Breast epithelium (tissue), 4 donors: ENCODE measurements at regions of chr7 and their contacts with region 1.

Region 1: GRCh38 chr7:145831616-145832206 is 284.9 kb upstream of the CNTNAP2 start:
- DNase-seq: no peak
- H3K4me3 ChIP-seq: no peak overlapping the region
- H3K27ac ChIP-seq: no peak overlapping the region
- H3K4me1 ChIP-seq: no peaks in the 10 kb centered on the region
- H3K27me3 ChIP-seq: no peaks in the 10 kb centered on the region
- CTCF ChIP-seq: no peak
- POLR2A ChIP-seq: no peak

Region 2: DNA sequence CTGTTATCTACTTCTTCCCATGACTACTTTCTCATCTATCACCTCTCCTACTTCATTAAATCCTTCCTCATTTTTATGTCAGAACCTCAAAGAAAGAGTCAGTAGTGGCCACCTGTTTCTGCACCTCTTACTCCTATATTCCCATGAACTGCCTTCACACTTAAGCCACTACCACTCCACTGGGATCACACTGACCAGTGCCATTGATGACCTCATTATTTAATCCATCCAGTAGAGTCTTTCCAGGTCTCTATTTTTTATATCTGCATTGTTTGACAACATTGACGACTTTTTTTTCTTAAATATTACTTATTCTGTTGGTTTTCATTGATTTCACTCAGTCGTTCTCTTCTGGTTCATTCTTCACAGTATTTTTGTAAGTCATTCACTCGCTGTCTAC is 286.5 kb before region 1 on chr7:
- intact Hi-C with region 1: loop called (anchors 5 kb)
- DNase-seq: no peak
- H3K4me3 ChIP-seq: no peak overlapping the region
- H3K27ac ChIP-seq: no peak overlapping the region
- H3K4me1 ChIP-seq: no peaks in the 10 kb centered on the region
- H3K27me3 ChIP-seq: no peaks in the 10 kb centered on the region
- CTCF ChIP-seq: no peak
- POLR2A ChIP-seq: no peak

Region 3: GRCh38 chr7:145774777-145775176 is 56.9 kb before region 1 on chr7:
- intact Hi-C with region 1: loop called (anchors 2 kb)
- DNase-seq: no peak
- H3K4me3 ChIP-seq: no peak overlapping the region
- H3K27ac ChIP-seq: no peak overlapping the region
- H3K4me1 ChIP-seq: no peaks in the 10 kb centered on the region
- H3K27me3 ChIP-seq: no peaks in the 10 kb centered on the region
- CTCF ChIP-seq: no peak
- POLR2A ChIP-seq: no peak

Region 4: GRCh38 chr7:145860809-145861208 is 29.1 kb after region 1 on chr7:
- intact Hi-C with region 1: no loop called
- DNase-seq: no peak
- H3K4me3 ChIP-seq: no peak overlapping the region
- H3K27ac ChIP-seq: no peak overlapping the region
- H3K4me1 ChIP-seq: no peaks in the 10 kb centered on the region
- H3K27me3 ChIP-seq: no peaks in the 10 kb centered on the region
- CTCF ChIP-seq: no peak
- POLR2A ChIP-seq: no peak